Endothelial cell of umbilical vein (primary cell): ENCODE measurements at regions of chr5 and their contacts with region 1.

Region 1: DNA sequence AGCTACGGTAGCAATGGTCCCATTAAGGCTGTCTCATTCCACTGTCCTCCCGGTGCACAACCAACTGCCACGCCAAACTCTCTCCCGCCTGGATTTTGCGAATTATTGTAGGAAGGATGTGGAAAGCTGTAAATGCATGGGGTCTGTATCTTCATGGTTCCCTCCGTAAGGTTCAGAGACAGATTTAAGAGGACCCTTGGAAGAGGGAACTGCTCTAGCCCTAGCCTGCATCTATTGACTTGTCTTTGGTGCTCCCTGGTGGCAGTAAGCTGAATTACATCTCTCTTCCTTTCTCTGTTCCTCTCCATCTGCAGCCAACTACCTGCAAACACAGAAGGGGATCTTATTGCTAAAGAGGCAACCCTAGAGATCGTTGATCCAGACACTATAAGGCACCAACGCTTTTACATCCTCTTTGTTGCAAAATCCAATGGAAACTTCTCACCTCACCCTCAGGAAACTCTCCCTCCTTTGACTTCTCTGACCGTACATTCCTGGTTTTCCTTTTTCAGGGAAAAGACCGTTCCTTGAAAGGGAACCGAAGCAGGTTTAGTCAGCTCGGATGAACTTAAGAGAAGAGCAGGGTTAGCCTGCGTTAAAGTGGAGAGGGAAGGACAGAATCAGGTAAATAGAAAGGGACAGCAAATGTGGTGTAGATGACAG is 11.9 kb downstream of the CAPSL start:
- DNase-seq: peak; percentile 54
- H3K4me3 ChIP-seq: no peak overlapping the region
- H3K27ac ChIP-seq: no peak overlapping the region
- H3K4me1 ChIP-seq: no peaks in the 10 kb centered on the region
- H3K27me3 ChIP-seq: peaks cover 2 to 3% of the 10 kb centered on the region in 2 experiments
- CTCF ChIP-seq: peak; percentile 69 to 70
- POLR2A ChIP-seq: no peak

Region 2: DNA sequence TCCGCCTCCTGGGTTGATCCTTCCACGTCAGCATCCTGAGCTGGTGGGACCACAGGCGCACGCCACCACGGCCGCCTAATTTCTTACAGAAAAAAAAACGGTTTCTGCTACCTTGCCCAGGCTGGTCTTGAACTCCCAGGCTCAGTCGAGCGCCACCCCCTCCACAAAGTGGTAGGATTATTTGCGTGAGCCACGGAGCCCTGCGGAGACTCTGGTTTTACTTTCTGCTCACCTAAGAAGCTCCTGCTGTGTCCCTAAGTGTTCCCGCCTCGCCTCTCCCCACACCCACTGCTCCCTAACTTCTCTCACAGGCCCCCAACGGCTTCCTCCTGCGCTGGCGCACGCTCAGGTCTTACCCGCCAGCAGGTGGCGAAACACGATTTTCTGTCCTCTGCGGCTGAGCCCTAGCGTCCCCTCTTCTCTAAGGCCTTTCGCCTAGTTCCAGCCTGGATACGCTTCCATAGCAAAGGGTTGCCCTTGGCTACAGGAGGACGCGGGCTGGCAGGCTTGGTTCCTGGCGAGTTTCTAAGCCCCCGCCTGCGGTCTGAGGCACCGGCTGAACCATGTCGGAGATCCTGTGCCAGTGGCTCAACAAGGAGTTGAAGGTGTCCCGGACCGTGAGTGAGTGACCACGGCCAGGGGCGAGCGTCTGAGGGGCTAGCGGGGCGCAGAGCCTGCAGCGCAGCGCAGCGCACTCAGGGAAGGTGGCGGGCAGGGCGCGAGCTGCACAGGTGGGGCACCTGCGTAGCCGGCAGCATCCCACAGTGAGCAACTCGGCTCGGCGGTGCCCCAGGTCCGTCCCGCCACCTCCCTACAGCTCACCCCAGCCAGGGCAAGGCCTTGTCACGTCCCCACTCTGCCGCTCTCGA is 308.9 kb before region 1 on chr5 and contains the start of gene SPEF2:
- CTCF ChIA-PET with region 1: interaction called, 53 read pairs
- POLR2A ChIA-PET with region 1: no interaction called
- dilution Hi-C with region 1: no loop called
- intact Hi-C with region 1: loop called (anchors 1 kb)
- DNase-seq: peak; percentile 87
- H3K4me3 ChIP-seq: peak within 1 kb of the TSS in 2 of 3 experiments; percentile 39 to 49
- H3K27ac ChIP-seq: no peak within 1 kb of the TSS
- H3K4me1 ChIP-seq: no peaks in the 10 kb centered on the region
- H3K27me3 ChIP-seq: no peaks in the 10 kb centered on the region
- CTCF ChIP-seq: peak; percentile 86 to 87
- POLR2A ChIP-seq: no peak
- total RNA-seq, gene SPEF2: 0.73 and 0.76 TPM in 2 replicates

Region 3: GRCh38 chr5:35657877-35658276 is 268.6 kb before region 1 on chr5:
- CTCF ChIA-PET with region 1: interaction called, 339 read pairs
- POLR2A ChIA-PET with region 1: no interaction called
- dilution Hi-C with region 1: no loop called
- intact Hi-C with region 1: no loop called
- DNase-seq: no peak
- H3K4me3 ChIP-seq: no peak overlapping the region
- H3K27ac ChIP-seq: no peak overlapping the region
- H3K4me1 ChIP-seq: no peaks in the 10 kb centered on the region
- H3K27me3 ChIP-seq: no peaks in the 10 kb centered on the region
- CTCF ChIP-seq: no peak
- POLR2A ChIP-seq: no peak

Region 4: GRCh38 chr5:35789732-35790456 is 136.6 kb before region 1 on chr5:
- CTCF ChIA-PET with region 1: interaction called, 12 read pairs
- POLR2A ChIA-PET with region 1: no interaction called
- dilution Hi-C with region 1: no loop called
- intact Hi-C with region 1: no loop called
- DNase-seq: no peak
- H3K4me3 ChIP-seq: no peak overlapping the region
- H3K27ac ChIP-seq: no peak overlapping the region
- H3K4me1 ChIP-seq: peaks cover 11% of the 10 kb centered on the region
- H3K27me3 ChIP-seq: no peaks in the 10 kb centered on the region
- CTCF ChIP-seq: no peak
- POLR2A ChIP-seq: no peak

Region 5: DNA sequence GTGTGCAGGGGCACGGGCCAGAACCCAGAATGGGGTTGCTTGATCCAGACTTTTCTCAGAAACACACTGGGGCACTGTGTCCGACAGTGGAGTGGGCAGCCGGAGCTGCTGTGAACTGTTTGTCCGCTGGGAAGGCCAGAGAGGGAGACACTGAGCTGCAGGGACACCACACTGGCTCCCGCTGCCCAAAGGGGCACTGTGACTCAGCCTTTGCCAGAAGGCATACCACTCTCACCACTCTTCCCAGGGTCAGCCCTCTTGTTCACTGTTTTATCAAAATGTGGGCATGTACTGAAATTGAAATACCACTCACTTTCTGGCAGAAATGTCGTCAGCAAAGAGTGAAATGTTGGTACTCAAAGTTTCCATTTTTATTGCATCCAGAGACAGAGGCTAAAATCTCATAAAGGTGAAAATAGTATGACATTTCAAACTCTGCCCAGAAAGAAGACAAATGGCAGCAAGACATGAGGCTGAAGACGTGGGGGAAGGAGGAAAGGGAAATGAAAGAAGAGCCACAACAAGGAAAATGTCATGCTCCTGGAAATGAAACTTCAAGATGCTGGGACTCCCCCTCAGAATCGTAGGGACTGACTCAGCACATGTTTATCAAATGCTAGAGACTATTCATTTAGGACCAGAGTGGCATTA is 74.3 kb before region 1 on chr5:
- CTCF ChIA-PET with region 1: interaction called, 17 read pairs
- POLR2A ChIA-PET with region 1: no interaction called
- dilution Hi-C with region 1: no loop called
- intact Hi-C with region 1: no loop called
- DNase-seq: no peak
- H3K4me3 ChIP-seq: no peak overlapping the region
- H3K27ac ChIP-seq: no peak overlapping the region
- H3K4me1 ChIP-seq: peaks cover 10% of the 10 kb centered on the region
- H3K27me3 ChIP-seq: no peaks in the 10 kb centered on the region
- CTCF ChIP-seq: no peak
- POLR2A ChIP-seq: no peak